ENCODE measurements at regions of chr1 and their contacts with region 1.

Region 1: DNA sequence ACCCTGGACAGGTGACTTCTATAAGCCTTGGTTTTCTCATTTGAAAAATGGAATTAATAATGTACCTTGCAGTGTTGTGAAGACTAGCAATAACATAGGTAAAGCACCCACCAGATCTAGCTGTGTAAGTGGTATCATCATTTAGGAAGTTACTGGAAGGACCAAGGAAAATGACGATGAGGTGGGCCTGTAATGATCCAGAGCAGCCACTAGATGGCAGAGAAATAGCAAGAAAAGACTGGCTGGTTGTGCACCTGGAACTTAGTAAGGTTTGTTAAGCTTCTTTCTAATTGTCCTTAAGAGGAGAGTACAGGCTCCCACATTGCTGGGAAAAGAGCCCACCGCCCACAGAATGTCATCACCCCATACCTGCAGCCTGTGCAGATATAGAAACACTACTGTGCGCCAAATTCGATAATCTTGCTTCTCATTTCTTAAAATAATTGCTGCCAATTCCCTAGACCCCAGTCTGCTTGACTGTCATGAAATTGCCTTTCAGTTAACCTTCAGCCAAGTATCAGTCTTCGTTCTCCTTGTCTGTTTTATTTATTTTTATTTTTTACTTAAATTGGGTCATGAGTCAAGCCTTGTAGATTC is 37.2 kb downstream of the WNT4 start:
- DNase-seq: peak; percentile 36
- ATAC-seq: peak; percentile 73
- H3K4me3 ChIP-seq: no peak overlapping the region
- H3K27ac ChIP-seq: no peak overlapping the region
- H3K4me1 ChIP-seq: no peaks in the 10 kb centered on the region; the same call in 1 of the 2 replicates
- H3K27me3 ChIP-seq: no peaks in the 10 kb centered on the region
- CTCF ChIP-seq: peak; percentile 88

Region 2: DNA sequence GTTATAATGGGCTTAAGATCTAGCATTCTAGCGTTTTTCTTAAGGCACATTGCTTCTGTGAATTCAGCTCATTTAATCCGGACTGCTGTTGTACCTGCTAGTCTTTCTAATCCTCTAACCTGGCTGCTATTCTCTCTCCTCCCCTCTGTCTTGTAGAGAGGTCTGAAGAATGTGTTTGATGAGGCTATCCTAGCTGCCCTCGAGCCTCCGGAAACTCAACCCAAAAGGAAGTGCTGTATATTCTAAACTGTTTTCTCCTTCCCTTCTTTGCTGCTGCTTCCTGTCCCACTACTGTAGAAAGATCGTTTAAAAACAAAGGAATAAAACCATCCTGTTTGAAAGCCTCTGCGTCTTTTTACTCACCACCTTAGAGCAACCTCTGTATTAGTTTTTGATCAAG is 15.9 kb before region 1 on chr1:
- CTCF ChIA-PET with region 1: no interaction called
- POLR2A ChIA-PET with region 1: interaction called, 13 read pairs
- in situ Hi-C with region 1: no loop called
- intact Hi-C with region 1: no loop called
- DNase-seq: no peak
- ATAC-seq: 0 out of 2 replicates have a peak, but pooled peaks have one; percentile 31
- H3K4me3 ChIP-seq: no peak overlapping the region
- H3K27ac ChIP-seq: no peak overlapping the region
- H3K4me1 ChIP-seq: peaks cover 18% of the 10 kb centered on the region
- H3K27me3 ChIP-seq: no peaks in the 10 kb centered on the region
- CTCF ChIP-seq: no peak

Region 3: DNA sequence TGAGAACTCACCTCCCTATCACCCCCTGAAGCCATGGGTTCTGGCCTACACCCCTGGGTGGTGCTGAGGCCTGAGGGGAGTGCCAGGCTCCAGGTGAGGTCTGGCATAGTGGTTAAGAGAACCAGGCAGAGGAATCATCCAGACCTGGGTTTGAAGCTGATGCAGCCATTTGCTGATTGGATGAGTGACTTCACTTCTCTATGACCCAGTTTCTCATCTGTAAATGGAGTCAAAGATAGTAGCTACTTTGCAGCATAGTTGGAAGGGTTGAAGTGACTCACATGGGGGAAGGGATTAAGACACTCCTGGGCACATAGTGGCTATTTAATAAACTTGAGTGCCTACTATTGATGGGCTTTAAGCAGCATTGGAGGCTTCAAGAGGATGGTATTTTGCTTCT is 167.9 kb after region 1 on chr1:
- CTCF ChIA-PET with region 1: no interaction called
- POLR2A ChIA-PET with region 1: no interaction called
- in situ Hi-C with region 1: no loop called
- intact Hi-C with region 1: no loop called
- DNase-seq: no peak
- ATAC-seq: no peak
- H3K4me3 ChIP-seq: no peak overlapping the region
- H3K27ac ChIP-seq: no peak overlapping the region
- H3K4me1 ChIP-seq: no peaks in the 10 kb centered on the region
- H3K27me3 ChIP-seq: no peaks in the 10 kb centered on the region
- CTCF ChIP-seq: no peak

Region 4: GRCh38 chr1:22426781-22427180 is 321.1 kb after region 1 on chr1:
- CTCF ChIA-PET with region 1: no interaction called
- POLR2A ChIA-PET with region 1: no interaction called
- in situ Hi-C with region 1: no loop called
- intact Hi-C with region 1: no loop called
- DNase-seq: no peak
- ATAC-seq: no peak
- H3K4me3 ChIP-seq: no peak overlapping the region
- H3K27ac ChIP-seq: no peak overlapping the region
- H3K4me1 ChIP-seq: no peaks in the 10 kb centered on the region
- H3K27me3 ChIP-seq: no peaks in the 10 kb centered on the region; the same call in 1 of the 2 replicates
- CTCF ChIP-seq: no peak

Measured in Panc1 (cell line).